ENCODE measurements at regions of chr11 and their contacts with region 1.

Region 1: GRCh38 chr11:819129-819931 is 616 bp downstream of the PNPLA2 start:
- DNase-seq: peak; percentile 98
- H3K4me3 ChIP-seq: peak overlapping the region; percentile 71 to 79
- H3K27ac ChIP-seq: peak overlapping the region; percentile 73 to 75
- H3K4me1 ChIP-seq: peaks cover 14 to 26% of the 10 kb centered on the region in 2 experiments; a peak in 3 of 4 replicates
- H3K27me3 ChIP-seq: no peaks in the 10 kb centered on the region
- CTCF ChIP-seq: 0 out of 2 replicates have a peak, but pooled peaks have one; percentile 8
- EP300 ChIP-seq: no peak
- RAD21 ChIP-seq: no peak

Region 2: DNA sequence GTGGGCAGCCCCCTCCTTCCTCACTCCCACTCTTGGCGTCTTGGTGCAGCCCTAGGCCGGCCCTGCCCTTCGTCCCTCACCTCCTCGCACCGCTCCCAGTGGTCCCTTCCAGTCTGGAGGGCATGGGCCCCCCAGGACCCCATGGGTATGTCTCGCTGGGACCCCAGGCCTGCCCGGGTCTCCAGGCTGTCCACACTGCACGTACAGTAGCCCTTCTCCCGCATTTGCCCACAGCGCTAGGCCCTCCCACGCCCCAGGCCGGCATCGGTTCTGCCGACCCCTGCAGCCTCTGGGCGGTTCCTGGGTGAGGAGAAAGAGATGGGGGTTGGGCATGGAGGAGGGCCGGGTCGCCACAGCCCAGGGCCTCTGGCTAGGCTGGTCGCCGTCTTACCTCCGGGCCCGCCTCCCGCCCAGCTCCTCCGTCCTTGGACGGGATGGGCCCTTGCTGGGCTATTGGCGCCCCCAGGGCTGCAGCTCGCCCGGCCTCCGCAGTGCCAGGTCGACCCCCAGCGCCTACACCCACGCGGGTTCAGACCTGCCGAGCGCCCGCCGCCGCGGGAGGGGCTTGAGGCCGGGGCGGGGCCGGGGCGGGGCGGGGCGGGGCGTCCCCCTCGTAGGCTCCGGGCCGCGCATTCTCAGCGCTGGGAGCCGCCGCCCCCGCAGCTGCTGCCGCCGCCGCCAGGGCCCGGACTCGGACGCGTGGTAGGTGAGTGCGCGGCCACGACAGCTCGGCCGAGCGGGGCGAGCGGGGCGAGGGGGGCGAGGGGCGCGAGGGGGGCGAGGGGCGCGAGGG is 13.2 kb after region 1 on chr11 and contains the start of gene CD151:
- CTCF ChIA-PET with region 1: interaction called, 9 read pairs
- POLR2A ChIA-PET with region 1: interaction called, 16 read pairs
- DNase-seq: peak; percentile 88
- H3K4me3 ChIP-seq: peak within 1 kb of the TSS; percentile 79 to 81
- H3K27ac ChIP-seq: peak within 1 kb of the TSS; percentile 88 to 91
- H3K4me1 ChIP-seq: peaks cover 14 to 34% of the 10 kb centered on the region in 2 experiments; a peak in 2 of 4 replicates
- H3K27me3 ChIP-seq: no peaks in the 10 kb centered on the region
- CTCF ChIP-seq: no peak
- EP300 ChIP-seq: peak in 1 of 2 experiments; percentile 7; a peak in 1 of 4 replicates
- RAD21 ChIP-seq: no peak
- polyA plus RNA-seq, gene CD151: 922 and 1,149 TPM in 2 replicates

Measured in SK-N-SH (cell line).